ENCODE measurements at regions of chr9 and their contacts with region 1.

Region 1: DNA sequence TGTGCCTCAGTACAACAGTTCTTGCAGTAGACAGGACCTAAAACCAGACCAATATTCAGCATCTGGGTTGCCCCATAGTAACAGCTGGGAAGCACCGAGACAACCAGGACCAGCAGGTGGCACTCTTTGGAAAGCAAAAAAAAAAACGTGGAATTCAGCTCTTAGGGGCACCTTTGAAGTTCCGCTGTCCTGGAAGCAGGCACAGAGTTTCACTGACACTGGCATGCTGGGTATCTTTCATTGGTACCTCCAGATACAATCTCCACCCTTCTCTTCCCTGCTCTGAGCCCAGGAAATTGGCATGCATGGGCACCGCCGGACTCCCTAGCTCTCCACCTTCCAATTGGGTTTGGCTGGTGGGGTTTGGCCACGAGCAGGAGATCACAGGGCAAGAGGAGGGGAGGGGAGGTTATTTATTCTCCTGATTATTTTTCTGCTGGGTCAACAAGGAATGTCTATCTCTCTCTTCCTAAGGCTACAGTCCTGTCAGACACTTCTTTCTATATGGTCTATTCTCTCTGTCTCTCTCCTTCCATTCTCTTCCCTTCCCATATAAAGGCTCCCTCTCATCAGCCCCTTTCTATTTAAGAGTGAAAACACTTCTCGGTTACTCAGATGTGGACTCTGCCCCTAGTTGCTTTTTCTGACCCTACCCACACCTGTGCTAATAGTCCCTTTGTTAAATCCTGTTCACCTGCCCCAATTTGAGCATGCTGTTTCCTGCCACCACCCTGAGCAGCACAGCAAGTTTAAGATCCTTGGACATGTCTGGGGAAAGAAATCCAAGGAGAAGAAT is 1.9 kb upstream of the IDNK start:
- H3K4me3 ChIP-seq: no peak overlapping the region
- H3K27ac ChIP-seq: no peak overlapping the region
- H3K4me1 ChIP-seq: no peaks in the 10 kb centered on the region; the same call in 1 of the 2 replicates
- CTCF ChIP-seq: peak; percentile 46; the same call in 1 of the 2 replicates

Region 2: DNA sequence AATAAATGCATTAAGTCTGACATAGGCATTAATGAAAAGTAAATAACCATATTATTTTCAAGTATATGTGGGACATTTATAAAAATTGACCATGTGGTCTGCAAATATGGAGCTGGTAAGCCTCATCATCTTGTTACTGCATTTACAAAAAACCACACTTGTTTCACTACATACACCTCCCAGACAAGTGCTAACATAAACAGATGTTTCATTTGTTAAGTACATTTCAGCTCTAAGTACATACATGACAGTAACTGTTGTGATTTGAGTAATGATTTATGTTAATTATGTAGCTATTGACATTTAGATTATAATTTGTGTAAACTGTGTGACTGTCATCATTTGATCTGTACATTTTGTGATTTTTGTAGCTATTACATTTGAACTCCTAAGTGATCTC is 15.8 kb after region 1 on chr9:
- CTCF ChIA-PET with region 1: interaction called, 13 read pairs
- POLR2A ChIA-PET with region 1: interaction called, 3 read pairs
- H3K4me3 ChIP-seq: no peak overlapping the region
- H3K27ac ChIP-seq: no peak overlapping the region
- H3K4me1 ChIP-seq: no peaks in the 10 kb centered on the region
- CTCF ChIP-seq: no peak

Region 3: GRCh38 chr9:83698976-83699585 is 78.0 kb after region 1 on chr9:
- CTCF ChIA-PET with region 1: no interaction called
- POLR2A ChIA-PET with region 1: no interaction called
- H3K4me3 ChIP-seq: no peak overlapping the region
- H3K27ac ChIP-seq: no peak overlapping the region
- H3K4me1 ChIP-seq: peaks cover 4% of the 10 kb centered on the region; the same call in 1 of the 2 replicates
- CTCF ChIP-seq: no peak

Region 4: DNA sequence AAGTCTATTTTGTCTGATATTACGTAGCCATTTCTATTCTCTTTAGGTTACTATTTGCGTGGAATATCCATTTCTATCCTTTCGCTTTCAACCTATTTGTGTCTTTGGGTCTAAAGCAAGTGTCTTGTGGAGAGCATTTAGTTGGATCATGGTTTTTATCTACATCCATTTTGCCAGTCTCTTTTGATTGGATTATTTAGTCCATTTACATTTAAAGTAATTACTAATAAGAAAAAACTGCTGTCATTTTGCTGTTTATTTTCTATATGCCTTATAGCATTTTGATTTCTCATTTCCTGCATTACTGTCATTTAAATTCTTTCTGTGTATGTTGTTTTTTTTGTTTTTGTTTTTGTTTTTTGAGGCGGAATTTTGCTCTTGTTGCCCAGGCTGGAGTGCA is 112.7 kb after region 1 on chr9:
- CTCF ChIA-PET with region 1: no interaction called
- POLR2A ChIA-PET with region 1: no interaction called
- H3K4me3 ChIP-seq: no peak overlapping the region
- H3K27ac ChIP-seq: no peak overlapping the region
- H3K4me1 ChIP-seq: no peaks in the 10 kb centered on the region
- CTCF ChIP-seq: no peak

Measured in HEK293 (cell line).